Tibial artery (tissue), 4 donors: ENCODE measurements at regions of chr1 and their contacts with region 1.

Region 1: DNA sequence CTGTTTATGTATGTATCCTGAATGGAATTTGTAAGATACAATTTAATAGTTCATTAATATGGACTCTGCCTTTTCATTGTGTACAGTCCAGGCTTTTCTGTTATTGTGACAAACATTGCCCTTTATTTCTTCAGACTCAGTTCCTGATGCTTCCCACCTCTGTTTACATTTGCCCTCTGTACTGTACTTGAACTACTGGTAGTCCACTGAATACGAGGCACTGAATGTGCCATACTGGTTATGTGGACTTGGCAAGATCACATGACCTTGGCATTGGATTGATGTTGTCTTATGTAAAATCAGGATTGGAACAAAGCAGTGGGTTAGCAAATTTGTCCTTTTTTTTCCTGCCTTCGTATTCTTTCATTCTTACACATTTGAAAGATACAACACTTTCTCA is 27.8 kb downstream of the RALGPS2 start:
- DNase-seq: no peak
- H3K4me3 ChIP-seq: no peak overlapping the region
- H3K27ac ChIP-seq: no peak overlapping the region
- H3K4me1 ChIP-seq: peaks cover 0 to 3% (median 0%) of the 10 kb centered on the region in 4 donors
- H3K27me3 ChIP-seq: no peaks in the 10 kb centered on the region
- CTCF ChIP-seq: no peak

Region 2: DNA sequence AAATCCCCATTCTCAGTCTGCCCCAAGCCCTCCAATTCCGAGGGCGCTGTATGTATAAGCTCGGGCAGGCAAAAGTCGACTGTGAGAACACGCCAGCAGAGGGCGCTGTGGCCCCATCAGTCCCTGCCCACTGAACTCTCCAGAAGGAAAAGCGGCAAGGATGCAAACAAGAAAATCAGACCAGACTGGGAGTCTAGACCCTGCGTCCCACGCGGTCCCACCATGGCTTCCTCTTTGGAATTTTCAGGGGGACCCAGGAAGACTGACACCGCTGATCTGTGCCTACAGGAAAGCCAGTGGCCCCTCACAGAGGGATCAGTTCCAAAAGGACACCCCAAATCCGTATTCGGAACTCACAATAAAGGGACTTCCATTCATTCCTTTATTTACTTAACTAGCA is 220.5 kb before region 1 on chr1:
- intact Hi-C with region 1: loop called (anchors 2 kb)
- DNase-seq: peak; percentile 75 to 84
- H3K4me3 ChIP-seq: no peak overlapping the region
- H3K27ac ChIP-seq: no peak overlapping the region
- H3K4me1 ChIP-seq: peaks cover 0 to 7% (median 4%) of the 10 kb centered on the region in 4 donors
- H3K27me3 ChIP-seq: peaks cover 0 to 9% of the 10 kb centered on the region in 2 donors
- CTCF ChIP-seq: peak; percentile 80 to 88

Region 3: GRCh38 chr1:178542560-178543356 is 210.1 kb before region 1 on chr1:
- intact Hi-C with region 1: loop called (anchors 2 kb)
- DNase-seq: peak; percentile 84 to 91
- H3K4me3 ChIP-seq: peak overlapping the region; percentile 61 to 67
- H3K27ac ChIP-seq: peak overlapping the region; percentile 55 to 58
- H3K4me1 ChIP-seq: peaks cover 0 to 14% (median 6%) of the 10 kb centered on the region in 4 donors
- H3K27me3 ChIP-seq: no peaks in the 10 kb centered on the region
- CTCF ChIP-seq: peak; percentile 95 to 99

Region 4: GRCh38 chr1:178847396-178847849 is 94.5 kb after region 1 on chr1:
- intact Hi-C with region 1: no loop called
- DNase-seq: no peak
- H3K4me3 ChIP-seq: no peak overlapping the region
- H3K27ac ChIP-seq: no peak overlapping the region
- H3K4me1 ChIP-seq: peaks cover 0 to 2% (median 0%) of the 10 kb centered on the region in 4 donors
- H3K27me3 ChIP-seq: no peaks in the 10 kb centered on the region
- CTCF ChIP-seq: no peak